ENCODE measurements at regions of chr7 and their contacts with region 1.

Region 1: GRCh38 chr7:148698397-148699023 is at the start of gene CUL1:
- DNase-seq: peak; percentile 56 to 95 (median 76)

Region 2: GRCh38 chr7:148773334-148773733 is 74.8 kb after region 1 on chr7:
- intact Hi-C with region 1: no loop called
- DNase-seq: no peak

Region 3: DNA sequence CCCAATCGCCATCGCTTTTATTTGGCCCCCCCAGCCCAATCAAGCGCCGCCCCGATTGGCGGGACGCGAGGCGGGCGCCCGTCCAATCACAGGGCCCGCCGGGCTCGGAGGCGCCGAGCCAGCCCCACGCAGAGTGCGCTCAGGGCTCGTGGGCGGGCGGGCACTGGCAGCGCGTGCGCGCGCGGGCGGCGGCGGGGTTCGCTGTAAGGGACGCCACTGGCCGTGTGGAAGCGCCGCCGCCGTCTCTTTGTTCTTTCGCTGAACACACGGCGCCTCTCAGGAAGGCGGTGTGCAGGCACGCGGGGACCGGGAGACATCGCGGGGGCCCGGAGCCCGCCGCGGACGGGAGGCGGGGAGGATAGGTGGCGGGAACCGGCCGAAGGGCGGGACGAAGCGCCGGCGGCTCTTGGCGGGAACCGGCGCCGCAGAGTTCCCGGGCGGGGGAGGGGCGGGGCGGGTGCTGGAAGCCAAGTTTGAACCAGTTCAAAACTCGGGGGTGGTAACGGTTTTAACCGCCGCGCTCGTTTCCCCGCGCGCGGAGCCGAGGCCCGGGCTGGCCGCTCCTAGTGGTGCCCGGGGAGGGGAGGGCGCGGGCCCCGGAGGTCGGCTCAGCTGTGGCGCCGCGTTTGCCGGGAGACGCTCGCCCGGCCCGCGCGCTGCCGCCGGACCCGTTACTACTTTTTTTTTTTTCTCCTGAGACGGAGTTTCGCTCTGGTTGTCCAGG is 186.0 kb after region 1 on chr7:
- intact Hi-C with region 1: loop called (anchors 1 kb)
- DNase-seq: peak; percentile 86 to 99 (median 92)

Region 4: DNA sequence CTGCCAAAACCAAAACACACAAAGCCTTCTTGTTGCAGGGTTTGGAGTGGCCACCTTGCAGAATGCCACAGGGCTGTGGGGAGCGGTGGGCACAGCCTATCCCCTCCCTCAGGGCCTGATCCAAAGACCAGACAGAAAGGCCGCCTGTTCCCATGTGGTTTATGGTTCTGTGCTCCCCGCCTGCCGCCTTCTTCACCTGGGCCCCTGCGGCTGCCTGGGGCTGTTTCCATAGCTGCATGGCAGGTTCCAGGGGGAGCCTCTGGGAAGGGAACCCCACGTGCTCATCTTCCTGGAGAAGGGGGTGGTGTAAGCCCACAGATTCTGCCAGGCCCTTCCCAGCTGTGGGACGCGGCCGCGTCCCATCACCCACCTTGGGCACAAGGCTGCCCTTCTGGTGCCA is 256.3 kb after region 1 on chr7:
- intact Hi-C with region 1: loop called (anchors 10 kb)
- DNase-seq: peak in 2 of 10 donors; percentile 41 to 43

Region 5: GRCh38 chr7:149021725-149022062 is 323.2 kb after region 1 on chr7:
- intact Hi-C with region 1: no loop called
- DNase-seq: peak in 2 of 10 donors; percentile 35 to 78

Measured in posterior cingulate gyrus (tissue), 11 donors.